GM10248 (cell line): ENCODE measurements at regions of chr3 and their contacts with region 1.

Region 1: DNA sequence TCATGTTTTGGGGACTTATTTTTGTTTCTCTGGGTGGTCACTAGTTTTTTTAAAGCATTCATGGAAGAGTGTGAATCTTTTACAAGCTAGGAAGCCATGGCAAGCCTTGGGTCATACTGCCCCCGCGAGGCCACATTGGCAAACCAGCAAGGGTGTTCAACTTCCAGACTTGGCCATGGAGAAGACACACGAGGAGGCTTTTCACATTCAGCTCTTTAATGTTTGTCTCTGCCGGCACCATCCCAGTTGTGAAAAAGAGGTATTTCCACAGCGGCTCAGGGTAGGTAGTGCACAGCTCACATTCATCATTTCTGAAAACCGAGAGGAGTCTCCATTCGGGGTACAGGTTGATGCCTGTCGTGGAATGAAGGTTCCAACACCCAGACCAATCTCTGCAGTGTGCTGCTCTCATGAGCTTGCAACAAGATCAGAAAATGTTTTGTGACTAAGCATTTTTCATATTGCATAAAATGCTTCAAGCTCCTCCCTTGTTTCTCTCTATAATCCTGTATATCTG is 7.7 kb downstream of the CCR5 start:
- DNase-seq: peak; percentile 56
- CTCF ChIP-seq: peak; percentile 56

Region 2: DNA sequence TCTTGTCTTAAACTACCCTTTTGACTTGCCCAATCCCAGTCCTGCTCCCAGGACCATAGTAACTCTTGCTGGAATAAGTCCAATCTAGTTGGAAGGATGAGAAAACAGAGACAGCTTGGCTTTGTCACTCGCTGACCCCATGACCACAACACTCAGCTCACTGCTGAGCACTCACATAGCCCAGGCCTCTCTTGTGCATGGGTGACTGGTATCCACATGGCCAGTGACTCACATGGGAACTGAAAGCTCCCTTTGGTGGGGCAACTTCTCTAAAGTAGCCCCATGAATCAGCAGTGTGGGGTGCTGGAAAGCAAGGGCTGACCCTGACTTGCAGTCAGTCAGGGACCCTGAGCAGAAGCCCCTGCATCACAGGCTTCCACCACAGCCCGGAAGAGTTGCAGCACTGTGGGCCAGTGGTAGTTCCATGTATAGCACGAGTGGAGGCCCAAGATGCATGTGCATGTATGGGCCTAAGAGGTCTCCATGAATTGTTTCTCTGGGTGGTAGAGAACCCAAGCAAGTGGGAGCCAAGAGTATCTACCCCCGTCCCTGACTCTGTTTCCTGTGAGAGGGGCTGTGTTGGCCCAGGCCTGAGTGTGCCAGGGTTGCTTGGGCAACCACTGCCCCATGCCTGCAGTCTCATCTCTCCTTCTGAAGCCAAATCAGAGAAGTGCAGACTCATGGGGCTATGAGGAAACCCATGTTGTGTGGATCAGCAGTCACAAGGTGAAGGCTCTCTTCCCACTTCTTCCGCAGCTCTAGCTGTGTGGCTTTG is 289.1 kb before region 1 on chr3:
- CTCF ChIA-PET with region 1: interaction called, 10 read pairs
- POLR2A ChIA-PET with region 1: no interaction called
- DNase-seq: peak; percentile 71
- CTCF ChIP-seq: no peak

Region 3: GRCh38 chr3:46214751-46215352 is 163.6 kb before region 1 on chr3:
- CTCF ChIA-PET with region 1: interaction called, 50 read pairs
- POLR2A ChIA-PET with region 1: no interaction called
- DNase-seq: no peak
- CTCF ChIP-seq: peak; percentile 31

Region 4: GRCh38 chr3:46276502-46277099 is 101.9 kb before region 1 on chr3:
- CTCF ChIA-PET with region 1: interaction called, 13 read pairs
- POLR2A ChIA-PET with region 1: no interaction called
- DNase-seq: peak; percentile 63
- CTCF ChIP-seq: peak; percentile 69

Region 5: DNA sequence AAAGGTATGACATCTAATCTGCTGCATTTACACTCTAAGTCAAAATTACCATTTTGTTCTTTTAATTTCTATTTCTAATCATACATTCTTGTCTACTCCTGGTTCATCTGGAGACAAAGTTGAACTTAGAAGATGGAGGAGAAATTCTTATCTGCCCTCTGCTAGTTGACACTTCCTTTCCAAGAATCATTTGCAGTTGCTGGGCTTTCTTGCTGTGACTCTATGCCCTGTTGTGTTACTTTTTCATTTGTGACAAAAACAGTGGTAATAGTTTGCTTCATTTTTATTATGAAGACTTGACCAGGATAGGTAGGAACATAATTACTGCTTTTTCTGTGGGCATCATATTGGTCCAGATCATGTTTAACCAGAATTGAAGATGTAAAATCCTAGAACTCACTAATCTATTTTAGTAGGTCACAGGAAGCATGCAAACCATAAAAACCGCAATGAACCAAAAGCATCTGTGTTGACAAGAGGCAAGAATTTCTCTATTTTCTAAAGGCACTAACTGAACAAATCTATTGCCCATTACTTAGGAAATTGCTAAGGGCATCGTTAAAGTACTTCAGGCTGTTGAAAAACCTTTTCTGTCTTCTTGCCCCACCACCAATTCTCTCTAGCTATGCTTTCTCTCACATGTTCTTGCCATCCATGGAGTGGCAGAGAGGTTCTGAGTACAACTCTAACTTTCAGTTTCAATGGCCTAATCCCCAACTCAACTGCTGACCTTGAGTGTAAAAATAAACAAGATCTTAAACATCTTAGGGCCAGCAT is 28.8 kb before region 1 on chr3:
- CTCF ChIA-PET with region 1: no interaction called
- POLR2A ChIA-PET with region 1: no interaction called
- DNase-seq: no peak
- CTCF ChIP-seq: no peak

Region 6: DNA sequence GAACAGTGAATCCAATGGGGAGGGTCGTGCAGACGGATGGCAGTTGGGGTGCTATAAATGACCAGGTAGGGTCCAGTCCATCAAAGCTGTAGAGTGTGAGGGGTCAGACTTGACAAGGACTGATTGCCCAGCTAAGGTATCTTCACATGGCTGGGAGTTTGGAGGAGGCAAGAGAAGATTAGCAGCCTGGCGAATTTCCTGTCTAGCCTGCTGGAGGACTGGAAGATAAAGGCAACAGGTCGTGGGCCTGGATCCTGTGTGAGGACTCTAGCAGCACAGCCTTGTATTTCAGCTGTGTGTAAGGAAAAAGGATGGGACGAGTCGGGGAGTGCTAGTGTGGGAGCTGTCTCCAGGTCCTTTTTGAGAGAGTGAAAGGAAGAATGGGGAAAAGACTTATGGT is 10.8 kb after region 1 on chr3:
- CTCF ChIA-PET with region 1: interaction called, 10 read pairs
- POLR2A ChIA-PET with region 1: no interaction called
- DNase-seq: no peak
- CTCF ChIP-seq: no peak

Region 7: GRCh38 chr3:46413951-46414350 is 35.5 kb after region 1 on chr3:
- CTCF ChIA-PET with region 1: no interaction called
- POLR2A ChIA-PET with region 1: no interaction called
- DNase-seq: no peak
- CTCF ChIP-seq: no peak